Naive thymus-derived CD4-positive, alpha-beta T cell (primary cell): ENCODE measurements at regions of chr1 and their contacts with region 1.

Region 1: DNA sequence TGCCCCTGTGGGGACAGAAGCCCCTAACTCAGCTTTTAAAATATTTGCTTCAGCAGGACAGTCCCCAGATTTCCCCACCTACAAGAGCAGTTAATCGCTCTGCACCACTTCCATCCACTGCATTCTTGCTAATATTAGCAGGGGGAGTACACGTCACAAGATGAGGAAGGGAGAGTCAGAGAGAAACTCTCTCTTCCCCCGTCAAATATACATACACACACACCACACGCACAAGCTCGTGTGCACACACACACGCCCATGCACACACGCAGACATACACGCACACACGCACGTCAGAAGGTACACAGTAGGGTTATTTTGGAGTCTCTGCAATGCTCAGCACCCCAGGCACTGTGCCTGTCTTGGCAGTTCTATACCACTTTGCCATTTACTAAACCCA is 2.1 kb downstream of the CLCA1 start:
- DNase-seq: no peak
- ATAC-seq: no peak
- H3K4me3 ChIP-seq: no peak overlapping the region
- H3K4me3 Mint-ChIP-seq: no peak overlapping the region
- H3K27ac ChIP-seq: no peak overlapping the region
- H3K27ac Mint-ChIP-seq: no peak overlapping the region
- H3K4me1 ChIP-seq: no peaks in the 10 kb centered on the region
- H3K4me1 Mint-ChIP-seq: peaks cover 0 to 3% (median 0%) of the 10 kb centered on the region in 7 donors
- H3K27me3 ChIP-seq: peaks cover 0 to 3% of the 10 kb centered on the region in 2 donors
- H3K27me3 Mint-ChIP-seq: peaks cover 7 to 35% (median 11%) of the 10 kb centered on the region in 5 donors

Region 2: DNA sequence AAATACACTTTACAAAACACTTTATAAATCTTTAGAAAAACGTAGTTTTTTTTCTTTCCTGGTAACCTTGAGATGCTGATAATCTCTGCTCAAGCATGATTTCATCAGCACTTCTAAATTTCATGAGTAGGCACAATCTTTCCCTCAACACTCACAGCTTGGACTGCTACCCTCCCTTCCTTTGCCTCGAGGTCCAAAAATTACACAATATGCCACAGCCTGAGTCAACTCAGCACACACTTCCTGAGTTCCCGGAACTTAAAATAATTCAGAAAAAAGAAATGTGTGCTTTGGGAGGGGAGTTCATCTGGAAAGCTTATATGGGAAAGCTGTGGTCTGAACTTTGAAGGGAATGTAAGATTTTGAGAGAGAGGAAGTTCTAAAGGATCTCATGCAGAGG is 41.0 kb before region 1 on chr1:
- CTCF ChIA-PET with region 1: interaction called, 4 read pairs
- POLR2A ChIA-PET with region 1: no interaction called
- intact Hi-C with region 1: loop called in 1 of 2 experiments (anchors 5 kb)
- DNase-seq: no peak
- ATAC-seq: peak; percentile 82
- H3K4me3 ChIP-seq: no peak overlapping the region
- H3K4me3 Mint-ChIP-seq: no peak overlapping the region
- H3K27ac ChIP-seq: no peak overlapping the region
- H3K27ac Mint-ChIP-seq: no peak overlapping the region
- H3K4me1 ChIP-seq: no peaks in the 10 kb centered on the region
- H3K4me1 Mint-ChIP-seq: no peaks in the 10 kb centered on the region
- H3K27me3 ChIP-seq: no peaks in the 10 kb centered on the region
- H3K27me3 Mint-ChIP-seq: peaks cover 0 to 16% (median 7%) of the 10 kb centered on the region in 5 donors

Region 3: GRCh38 chr1:86741947-86742572 is 271.2 kb after region 1 on chr1:
- CTCF ChIA-PET with region 1: interaction called, 4 read pairs
- POLR2A ChIA-PET with region 1: no interaction called
- intact Hi-C with region 1: loop called in 1 of 2 experiments (anchors 1 kb)
- DNase-seq: peak in 7 of 9 donors; percentile 12 to 43 (median 26)
- ATAC-seq: no peak
- H3K4me3 ChIP-seq: no peak overlapping the region
- H3K4me3 Mint-ChIP-seq: peak overlapping the region in 1 of 10 donors; percentile 60
- H3K27ac ChIP-seq: no peak overlapping the region
- H3K27ac Mint-ChIP-seq: no peak overlapping the region
- H3K4me1 ChIP-seq: peaks cover 5 to 12% of the 10 kb centered on the region in 2 donors
- H3K4me1 Mint-ChIP-seq: peaks cover 0 to 6% (median 0%) of the 10 kb centered on the region in 7 donors
- H3K27me3 ChIP-seq: no peaks in the 10 kb centered on the region
- H3K27me3 Mint-ChIP-seq: no peaks in the 10 kb centered on the region

Region 4: GRCh38 chr1:86811142-86811924 is 340.5 kb after region 1 on chr1:
- CTCF ChIA-PET with region 1: no interaction called
- POLR2A ChIA-PET with region 1: no interaction called
- intact Hi-C with region 1: no loop called
- DNase-seq: no peak
- ATAC-seq: no peak
- H3K4me3 ChIP-seq: no peak overlapping the region
- H3K4me3 Mint-ChIP-seq: no peak overlapping the region
- H3K27ac ChIP-seq: no peak overlapping the region
- H3K27ac Mint-ChIP-seq: no peak overlapping the region
- H3K4me1 ChIP-seq: no peaks in the 10 kb centered on the region
- H3K4me1 Mint-ChIP-seq: no peaks in the 10 kb centered on the region
- H3K27me3 ChIP-seq: no peaks in the 10 kb centered on the region
- H3K27me3 Mint-ChIP-seq: peaks cover 0 to 18% (median 4%) of the 10 kb centered on the region in 5 donors